MCF 10A (cell line): ENCODE measurements at regions of chr1 and their contacts with region 1.

Region 1: GRCh38 chr1:248807067-248807737 is 18.5 kb downstream of the SH3BP5L start:
- DNase-seq: peak; percentile 66
- H3K4me3 Mint-ChIP-seq: no peak overlapping the region
- H3K27ac Mint-ChIP-seq: no peak overlapping the region
- H3K4me1 Mint-ChIP-seq: peaks cover 18% of the 10 kb centered on the region
- H3K27me3 Mint-ChIP-seq: no peaks in the 10 kb centered on the region
- CTCF ChIP-seq: peak; percentile 98

Region 2: DNA sequence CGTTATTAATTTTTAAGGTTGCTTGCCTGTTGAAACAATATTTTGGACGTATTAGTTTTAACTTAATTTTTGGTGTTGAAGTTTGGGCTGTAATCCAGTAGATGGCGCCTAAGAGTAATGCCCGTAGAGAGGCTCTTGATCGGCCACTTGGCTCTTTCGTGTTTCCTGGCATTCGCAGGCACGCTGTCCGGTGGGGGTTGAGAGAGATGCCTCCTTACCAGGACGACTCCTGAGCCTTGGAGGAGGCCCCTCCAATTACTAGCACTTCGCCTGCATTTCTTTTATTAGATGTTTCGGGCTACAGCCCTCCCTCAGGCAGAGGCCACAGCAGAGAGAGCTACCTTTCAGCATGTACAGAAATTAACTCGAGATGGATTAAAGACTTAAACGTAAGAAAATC is 564.0 kb before region 1 on chr1:
- CTCF ChIA-PET with region 1: interaction called, 7 read pairs
- POLR2A ChIA-PET with region 1: no interaction called
- intact Hi-C with region 1: loop called (anchors 1 kb)
- DNase-seq: peak; percentile 67
- H3K4me3 Mint-ChIP-seq: peak overlapping the region; percentile 64
- H3K27ac Mint-ChIP-seq: no peak overlapping the region
- H3K4me1 Mint-ChIP-seq: peaks cover 13% of the 10 kb centered on the region
- H3K27me3 Mint-ChIP-seq: no peaks in the 10 kb centered on the region
- CTCF ChIP-seq: peak; percentile 92

Region 3: GRCh38 chr1:248622570-248623001 is 184.6 kb before region 1 on chr1:
- CTCF ChIA-PET with region 1: interaction called, 159 read pairs
- POLR2A ChIA-PET with region 1: interaction called, 6 read pairs
- intact Hi-C with region 1: loop called (anchors 1 kb)
- DNase-seq: peak; percentile 71
- H3K4me3 Mint-ChIP-seq: no peak overlapping the region
- H3K27ac Mint-ChIP-seq: no peak overlapping the region
- H3K4me1 Mint-ChIP-seq: peaks cover 9% of the 10 kb centered on the region
- H3K27me3 Mint-ChIP-seq: no peaks in the 10 kb centered on the region
- CTCF ChIP-seq: peak; percentile 74

Region 4: GRCh38 chr1:248703674-248704073 is 103.5 kb before region 1 on chr1:
- CTCF ChIA-PET with region 1: interaction called, 155 read pairs
- POLR2A ChIA-PET with region 1: interaction called, 5 read pairs
- intact Hi-C with region 1: loop called (anchors 1 kb)
- DNase-seq: no peak
- H3K4me3 Mint-ChIP-seq: no peak overlapping the region
- H3K27ac Mint-ChIP-seq: no peak overlapping the region
- H3K4me1 Mint-ChIP-seq: no peaks in the 10 kb centered on the region
- H3K27me3 Mint-ChIP-seq: no peaks in the 10 kb centered on the region
- CTCF ChIP-seq: peak; percentile 32

Region 5: GRCh38 chr1:248793592-248793991 is 13.6 kb before region 1 on chr1:
- CTCF ChIA-PET with region 1: interaction called, 49 read pairs
- POLR2A ChIA-PET with region 1: no interaction called
- intact Hi-C with region 1: no loop called
- DNase-seq: no peak
- H3K4me3 Mint-ChIP-seq: no peak overlapping the region
- H3K27ac Mint-ChIP-seq: no peak overlapping the region
- H3K4me1 Mint-ChIP-seq: no peaks in the 10 kb centered on the region
- H3K27me3 Mint-ChIP-seq: peaks cover 18% of the 10 kb centered on the region
- CTCF ChIP-seq: no peak

Region 6: DNA sequence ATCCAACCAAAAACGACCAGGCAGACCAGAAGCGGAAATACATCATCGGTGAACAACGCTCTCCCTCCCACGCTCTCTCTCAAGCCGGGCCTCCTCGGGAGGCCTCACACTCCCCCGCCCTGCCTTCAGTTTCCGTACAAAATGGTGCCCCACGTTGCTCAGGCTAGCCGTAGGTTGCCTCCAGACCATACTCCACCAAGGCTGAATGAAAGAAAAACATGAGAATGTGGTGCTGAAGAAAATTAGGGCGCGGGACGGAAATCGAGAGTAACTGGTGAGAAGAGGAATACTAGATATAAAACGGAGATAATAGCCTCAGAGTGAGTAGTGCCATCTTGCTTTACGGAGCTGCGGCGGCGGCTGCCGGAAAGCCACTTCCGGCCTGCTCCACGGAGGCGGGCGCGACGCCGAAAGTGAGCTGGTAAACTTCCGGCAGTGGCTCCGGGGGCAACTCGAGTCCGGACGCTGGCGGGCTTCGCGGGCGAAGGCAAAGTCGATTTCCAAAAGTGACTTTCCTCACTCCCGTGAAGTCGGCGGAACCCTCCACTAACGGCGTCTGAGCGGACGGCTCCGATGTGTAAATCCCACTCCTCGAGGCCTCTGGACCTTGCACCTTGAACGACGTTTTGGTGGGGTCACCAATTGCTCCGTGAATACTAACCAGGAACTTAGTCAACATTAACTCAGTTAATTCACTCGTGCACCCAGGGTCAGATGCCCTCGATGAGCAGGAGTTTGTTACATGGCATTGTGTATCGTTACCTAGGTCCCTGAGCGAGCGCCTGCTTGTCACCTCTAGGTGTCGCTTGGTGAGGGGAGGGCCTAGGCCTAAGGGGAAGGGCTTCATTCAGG is 18.9 kb after region 1 on chr1 and contains the start of gene SH3BP5L:
- CTCF ChIA-PET with region 1: interaction called, 40 read pairs
- POLR2A ChIA-PET with region 1: interaction called, 16 read pairs
- intact Hi-C with region 1: no loop called
- DNase-seq: peak; percentile 100
- H3K4me3 Mint-ChIP-seq: peak within 1 kb of the TSS; percentile 78
- H3K27ac Mint-ChIP-seq: peak within 1 kb of the TSS; percentile 94
- H3K4me1 Mint-ChIP-seq: peaks cover 56% of the 10 kb centered on the region
- H3K27me3 Mint-ChIP-seq: no peaks in the 10 kb centered on the region
- CTCF ChIP-seq: peak; percentile 78
- total RNA-seq, gene SH3BP5L: 31.5 and 34.0 TPM in 2 replicates